ENCODE measurements at regions of chr12 and their contacts with region 1.

Region 1: GRCh38 chr12:67885375-67886169 is 103.7 kb upstream of the IFNG-AS1 start:
- DNase-seq: peak; percentile 10
- H3K4me3 Mint-ChIP-seq: peak overlapping the region; percentile 20
- H3K27ac Mint-ChIP-seq: peak overlapping the region; percentile 83
- H3K4me1 Mint-ChIP-seq: peaks cover 41% of the 10 kb centered on the region
- H3K27me3 Mint-ChIP-seq: no peaks in the 10 kb centered on the region
- CTCF ChIP-seq: no peak

Region 2: GRCh38 chr12:67943226-67943892 is 57.8 kb after region 1 on chr12:
- CTCF ChIA-PET with region 1: interaction called, 3 read pairs
- intact Hi-C with region 1: loop called (anchors 5 kb)
- DNase-seq: peak; percentile 72
- H3K4me3 Mint-ChIP-seq: no peak overlapping the region
- H3K27ac Mint-ChIP-seq: peak overlapping the region; percentile 10
- H3K4me1 Mint-ChIP-seq: peaks cover 39% of the 10 kb centered on the region
- H3K27me3 Mint-ChIP-seq: no peaks in the 10 kb centered on the region
- CTCF ChIP-seq: peak; percentile 35